MCF 10A (cell line): ENCODE measurements at regions of chr15 and their contacts with region 1.

Region 1: DNA sequence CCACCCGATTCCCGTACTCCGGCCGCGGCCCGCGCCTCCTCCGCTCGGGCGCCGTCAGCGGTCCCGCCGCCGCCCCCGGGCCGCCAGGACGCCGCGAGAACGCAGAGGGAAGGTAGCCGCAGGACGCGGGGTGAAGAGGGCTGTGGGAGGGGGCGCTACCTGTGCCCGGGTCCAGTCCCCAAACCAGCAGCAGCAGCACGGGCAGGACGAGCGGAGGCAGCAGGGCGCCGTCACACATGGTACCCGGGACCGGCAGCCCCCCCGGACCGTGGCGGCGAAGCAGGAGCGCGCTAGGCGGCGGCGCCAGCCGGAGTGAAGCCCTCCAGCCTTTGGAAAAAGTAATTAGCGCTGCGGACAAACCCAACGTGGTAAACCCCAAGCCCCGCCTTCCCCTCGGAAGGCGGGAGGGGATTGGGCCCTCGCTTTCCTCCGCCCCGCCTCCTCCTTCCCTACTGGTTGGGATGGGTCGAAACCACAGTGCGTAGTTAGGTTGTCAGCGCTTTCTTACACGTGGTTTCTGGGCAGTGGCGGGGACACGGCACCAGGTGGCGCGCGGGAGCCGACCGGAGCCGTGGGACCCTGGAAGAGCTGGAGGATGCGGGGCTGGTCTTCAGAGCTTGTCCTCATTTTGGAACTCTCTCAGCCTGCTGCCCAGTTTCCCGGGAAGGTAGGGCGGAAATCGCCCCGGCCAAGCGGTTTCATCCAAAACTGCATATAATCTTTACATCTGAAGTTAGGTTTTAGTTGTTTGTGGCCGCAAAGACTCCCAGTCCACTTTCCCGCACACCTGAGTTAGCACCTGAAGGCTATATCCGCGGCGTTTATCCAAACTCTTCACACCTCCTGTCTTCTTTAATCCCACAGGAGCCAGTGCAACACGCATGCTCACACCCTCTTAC is at the start of gene ADAMTS17:
- DNase-seq: peak; percentile 88
- H3K4me3 Mint-ChIP-seq: peak within 1 kb of the TSS; percentile 59
- H3K27ac Mint-ChIP-seq: no peak within 1 kb of the TSS
- H3K4me1 Mint-ChIP-seq: peaks cover 8% of the 10 kb centered on the region
- H3K27me3 Mint-ChIP-seq: no peaks in the 10 kb centered on the region
- CTCF ChIP-seq: peak; percentile 76
- total RNA-seq, gene ADAMTS17: 4.0 and 7.7 TPM in 2 replicates

Region 2: GRCh38 chr15:99976811-99977271 is 365.1 kb before region 1 on chr15:
- CTCF ChIA-PET with region 1: interaction called, 4 read pairs
- POLR2A ChIA-PET with region 1: no interaction called
- intact Hi-C with region 1: loop called (anchors 5 kb)
- DNase-seq: peak; percentile 86
- H3K4me3 Mint-ChIP-seq: no peak overlapping the region
- H3K27ac Mint-ChIP-seq: peak overlapping the region; percentile 84
- H3K4me1 Mint-ChIP-seq: peaks cover 20% of the 10 kb centered on the region
- H3K27me3 Mint-ChIP-seq: no peaks in the 10 kb centered on the region
- CTCF ChIP-seq: no peak

Region 3: GRCh38 chr15:100043015-100043641 is 298.8 kb before region 1 on chr15:
- CTCF ChIA-PET with region 1: interaction called, 5 read pairs
- POLR2A ChIA-PET with region 1: no interaction called
- intact Hi-C with region 1: loop called (anchors 2 kb)
- DNase-seq: peak; percentile 75
- H3K4me3 Mint-ChIP-seq: peak overlapping the region; percentile 62
- H3K27ac Mint-ChIP-seq: peak overlapping the region; percentile 81
- H3K4me1 Mint-ChIP-seq: peaks cover 33% of the 10 kb centered on the region
- H3K27me3 Mint-ChIP-seq: no peaks in the 10 kb centered on the region
- CTCF ChIP-seq: no peak

Region 4: GRCh38 chr15:100330221-100330620 is 11.7 kb before region 1 on chr15:
- CTCF ChIA-PET with region 1: interaction called, 11 read pairs
- POLR2A ChIA-PET with region 1: interaction called, 5 read pairs
- intact Hi-C with region 1: no loop called
- DNase-seq: no peak
- H3K4me3 Mint-ChIP-seq: no peak overlapping the region
- H3K27ac Mint-ChIP-seq: no peak overlapping the region
- H3K4me1 Mint-ChIP-seq: no peaks in the 10 kb centered on the region
- H3K27me3 Mint-ChIP-seq: no peaks in the 10 kb centered on the region
- CTCF ChIP-seq: no peak

Region 5: DNA sequence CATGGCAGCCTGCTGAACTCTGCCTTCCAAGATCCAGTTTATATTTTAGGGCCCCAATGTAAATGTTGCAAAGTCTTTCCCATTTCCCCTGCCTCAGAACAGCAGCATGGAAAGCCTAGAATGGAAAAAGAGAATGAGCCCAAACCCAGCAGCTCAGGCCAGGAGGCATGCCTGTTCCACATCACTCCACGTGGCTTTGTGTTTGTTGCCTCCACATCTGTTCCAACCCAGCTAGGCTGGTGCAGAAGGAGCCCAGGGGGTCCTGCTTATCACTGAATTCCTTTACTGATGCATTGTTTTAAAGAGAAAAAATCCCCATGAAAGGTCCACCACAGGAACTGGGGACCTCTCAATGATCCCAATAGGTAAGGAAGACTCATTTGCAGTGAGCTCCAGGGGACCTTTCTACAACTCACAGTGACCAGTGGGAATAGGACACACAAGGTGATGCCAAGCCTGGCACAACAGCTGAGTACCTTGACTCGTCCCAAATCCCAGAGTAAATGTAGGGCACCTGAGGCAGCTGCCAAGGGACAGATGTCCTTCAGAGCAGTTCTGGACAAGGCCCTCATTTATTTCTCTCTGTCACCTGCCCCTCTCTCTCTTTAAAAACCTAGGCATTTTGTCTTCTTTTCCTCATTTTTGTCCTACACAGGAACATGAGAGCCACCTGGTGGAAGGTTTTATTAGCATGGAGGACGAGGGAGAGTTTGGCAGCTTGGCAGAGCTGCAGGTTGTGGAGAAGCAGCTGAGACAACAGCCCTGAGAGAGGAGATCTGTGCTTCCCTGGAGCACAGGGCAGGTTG is 41.6 kb after region 1 on chr15:
- CTCF ChIA-PET with region 1: interaction called, 213 read pairs
- POLR2A ChIA-PET with region 1: interaction called, 4 read pairs
- intact Hi-C with region 1: no loop called
- DNase-seq: peak; percentile 50
- H3K4me3 Mint-ChIP-seq: no peak overlapping the region
- H3K27ac Mint-ChIP-seq: no peak overlapping the region
- H3K4me1 Mint-ChIP-seq: peaks cover 5% of the 10 kb centered on the region
- H3K27me3 Mint-ChIP-seq: no peaks in the 10 kb centered on the region
- CTCF ChIP-seq: peak; percentile 60

Region 6: DNA sequence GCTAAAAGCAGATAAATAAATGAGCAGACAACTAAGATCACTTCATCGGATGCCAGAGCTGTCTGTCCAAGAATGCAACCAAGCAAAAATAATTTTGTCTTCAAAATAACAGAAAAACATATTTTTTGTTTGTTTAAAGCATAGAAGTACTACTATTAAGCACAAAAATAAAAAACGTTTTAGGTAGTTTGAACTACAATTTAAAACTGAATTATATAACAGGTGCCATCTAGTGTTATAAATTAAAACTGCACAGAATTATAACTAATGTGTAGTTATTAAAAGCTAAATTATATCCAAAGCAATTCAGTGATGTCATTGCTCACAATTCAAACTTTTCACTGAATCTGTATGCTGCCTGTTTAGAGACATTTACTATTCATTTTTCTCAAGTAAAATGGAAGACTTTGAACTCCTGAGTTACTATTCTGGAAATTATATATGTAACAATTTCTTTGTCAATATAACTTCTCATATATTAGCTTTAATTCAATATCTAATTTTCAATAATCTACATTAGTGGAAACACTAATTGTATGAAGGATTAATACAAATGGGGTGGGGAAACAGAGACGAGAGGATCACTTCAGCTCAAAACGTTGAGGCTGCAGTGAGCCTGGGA is 230.6 kb after region 1 on chr15:
- CTCF ChIA-PET with region 1: interaction called, 80 read pairs
- POLR2A ChIA-PET with region 1: interaction called, 3 read pairs
- intact Hi-C with region 1: no loop called
- DNase-seq: peak; percentile 11
- H3K4me3 Mint-ChIP-seq: no peak overlapping the region
- H3K27ac Mint-ChIP-seq: no peak overlapping the region
- H3K4me1 Mint-ChIP-seq: no peaks in the 10 kb centered on the region
- H3K27me3 Mint-ChIP-seq: no peaks in the 10 kb centered on the region
- CTCF ChIP-seq: peak; percentile 41